ENCODE measurements at regions of chr19 and their contacts with region 1.

Region 1: GRCh38 chr19:16185123-16185767 is at the start of gene FAM32A:
- DNase-seq: peak; percentile 97 to 100 (median 98)
- ATAC-seq: peak; percentile 93
- H3K4me3 ChIP-seq: peak within 1 kb of the TSS; percentile 92
- H3K4me3 Mint-ChIP-seq: peak within 1 kb of the TSS; percentile 93
- H3K27ac ChIP-seq: peak within 1 kb of the TSS; percentile 83 to 85
- H3K27ac Mint-ChIP-seq: peak within 1 kb of the TSS; percentile 87
- H3K4me1 ChIP-seq: peaks cover 44% of the 10 kb centered on the region
- H3K4me1 Mint-ChIP-seq: peaks cover 29% of the 10 kb centered on the region
- H3K27me3 ChIP-seq: no peaks in the 10 kb centered on the region
- H3K27me3 Mint-ChIP-seq: no peaks in the 10 kb centered on the region
- CTCF ChIP-seq: no peak
- total RNA-seq, gene FAM32A: 44.5 to 50.3 TPM

Region 2: GRCh38 chr19:15629003-15629880 is 556.0 kb before region 1 on chr19:
- CTCF ChIA-PET with region 1: no interaction called
- POLR2A ChIA-PET with region 1: interaction called, 4 read pairs
- intact Hi-C with region 1: loop called (anchors 1 kb)
- DNase-seq: peak; percentile 77 to 95 (median 90)
- ATAC-seq: peak; percentile 98
- H3K4me3 ChIP-seq: no peak overlapping the region
- H3K4me3 Mint-ChIP-seq: no peak overlapping the region
- H3K27ac ChIP-seq: no peak overlapping the region
- H3K27ac Mint-ChIP-seq: no peak overlapping the region
- H3K4me1 ChIP-seq: peaks cover 10% of the 10 kb centered on the region
- H3K4me1 Mint-ChIP-seq: no peaks in the 10 kb centered on the region
- H3K27me3 ChIP-seq: peaks cover 0 to 7% of the 10 kb centered on the region in 2 experiments
- H3K27me3 Mint-ChIP-seq: peaks cover 22% of the 10 kb centered on the region
- CTCF ChIP-seq: peak; percentile 93

Region 3: GRCh38 chr19:16062789-16063188 is 122.5 kb before region 1 on chr19:
- CTCF ChIA-PET with region 1: interaction called, 3 read pairs
- POLR2A ChIA-PET with region 1: interaction called, 3 read pairs
- intact Hi-C with region 1: loop called in 1 of 2 experiments (anchors 1 kb)
- DNase-seq: peak; percentile 58 to 84 (median 66)
- ATAC-seq: peak; percentile 91
- H3K4me3 ChIP-seq: no peak overlapping the region
- H3K4me3 Mint-ChIP-seq: no peak overlapping the region
- H3K27ac ChIP-seq: no peak overlapping the region
- H3K27ac Mint-ChIP-seq: no peak overlapping the region
- H3K4me1 ChIP-seq: peaks cover 24% of the 10 kb centered on the region
- H3K4me1 Mint-ChIP-seq: peaks cover 18% of the 10 kb centered on the region
- H3K27me3 ChIP-seq: no peaks in the 10 kb centered on the region
- H3K27me3 Mint-ChIP-seq: no peaks in the 10 kb centered on the region
- CTCF ChIP-seq: peak; percentile 90

Region 4: GRCh38 chr19:16111160-16111908 is 73.9 kb before region 1 on chr19 and contains the start of gene RAB8A:
- CTCF ChIA-PET with region 1: no interaction called
- POLR2A ChIA-PET with region 1: interaction called, 16 read pairs
- intact Hi-C with region 1: loop called (anchors 1 kb)
- DNase-seq: peak; percentile 98 to 100 (median 99)
- ATAC-seq: peak; percentile 86
- H3K4me3 ChIP-seq: peak within 1 kb of the TSS; percentile 94
- H3K4me3 Mint-ChIP-seq: peak within 1 kb of the TSS; percentile 95
- H3K27ac ChIP-seq: peak within 1 kb of the TSS; percentile 89 to 92
- H3K27ac Mint-ChIP-seq: peak within 1 kb of the TSS; percentile 96
- H3K4me1 ChIP-seq: peaks cover 51% of the 10 kb centered on the region
- H3K4me1 Mint-ChIP-seq: peaks cover 44% of the 10 kb centered on the region
- H3K27me3 ChIP-seq: no peaks in the 10 kb centered on the region
- H3K27me3 Mint-ChIP-seq: no peaks in the 10 kb centered on the region
- CTCF ChIP-seq: peak; percentile 84
- total RNA-seq, gene RAB8A: 74.9 to 79.0 TPM

Region 5: GRCh38 chr19:16301999-16302694 is 116.9 kb after region 1 on chr19:
- CTCF ChIA-PET with region 1: no interaction called
- POLR2A ChIA-PET with region 1: no interaction called
- intact Hi-C with region 1: no loop called
- DNase-seq: no peak
- ATAC-seq: no peak
- H3K4me3 ChIP-seq: no peak overlapping the region
- H3K4me3 Mint-ChIP-seq: no peak overlapping the region
- H3K27ac ChIP-seq: no peak overlapping the region
- H3K27ac Mint-ChIP-seq: no peak overlapping the region
- H3K4me1 ChIP-seq: no peaks in the 10 kb centered on the region
- H3K4me1 Mint-ChIP-seq: no peaks in the 10 kb centered on the region
- H3K27me3 ChIP-seq: no peaks in the 10 kb centered on the region
- H3K27me3 Mint-ChIP-seq: no peaks in the 10 kb centered on the region
- CTCF ChIP-seq: no peak

Region 6: DNA sequence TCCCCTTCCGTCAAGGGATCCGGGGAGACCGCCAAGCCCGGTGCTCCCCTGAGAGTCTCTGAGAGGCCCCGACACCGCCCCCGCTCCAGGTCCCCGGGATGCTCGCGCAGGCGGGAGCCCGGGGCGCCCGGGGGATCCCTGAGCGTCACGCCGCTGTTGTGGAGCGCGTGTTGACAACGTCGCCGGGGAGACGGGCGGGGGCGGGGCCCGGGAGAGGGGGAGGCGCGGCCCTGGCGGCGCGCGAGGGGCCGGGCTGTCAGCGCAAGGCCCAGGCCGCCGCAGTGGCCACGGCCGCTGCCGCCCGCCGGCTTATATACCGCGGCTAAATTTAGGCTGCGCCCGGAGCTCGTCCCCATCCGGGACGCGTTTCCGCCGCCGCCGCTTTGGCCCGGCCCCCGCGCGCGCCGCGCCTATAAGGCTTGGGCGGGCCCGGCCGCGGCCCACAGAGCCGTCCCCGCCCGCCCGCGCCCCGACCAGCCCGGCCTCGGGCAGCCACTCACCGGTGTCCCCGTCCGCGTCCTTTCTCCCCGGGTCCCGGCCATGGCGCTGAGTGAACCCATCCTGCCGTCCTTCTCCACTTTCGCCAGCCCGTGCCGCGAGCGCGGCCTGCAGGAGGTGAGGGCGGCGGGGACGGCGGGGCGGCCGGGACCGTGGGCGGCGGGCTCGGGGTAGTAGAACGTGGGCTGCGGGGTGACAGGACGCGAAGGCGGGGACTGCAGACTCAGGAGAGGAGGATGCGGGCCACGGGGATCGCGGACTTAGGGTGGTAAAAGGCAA is 139.3 kb after region 1 on chr19 and contains the start of gene KLF2:
- CTCF ChIA-PET with region 1: no interaction called
- POLR2A ChIA-PET with region 1: interaction called, 23 read pairs
- intact Hi-C with region 1: no loop called
- DNase-seq: peak; percentile 91 to 99 (median 94)
- ATAC-seq: peak; percentile 55
- H3K4me3 ChIP-seq: peak within 1 kb of the TSS; percentile 98
- H3K4me3 Mint-ChIP-seq: peak within 1 kb of the TSS; percentile 83
- H3K27ac ChIP-seq: peak within 1 kb of the TSS; percentile 90 to 100
- H3K27ac Mint-ChIP-seq: peak within 1 kb of the TSS; percentile 97
- H3K4me1 ChIP-seq: peaks cover 42% of the 10 kb centered on the region
- H3K4me1 Mint-ChIP-seq: peaks cover 60% of the 10 kb centered on the region
- H3K27me3 ChIP-seq: no peaks in the 10 kb centered on the region
- H3K27me3 Mint-ChIP-seq: peaks cover 24% of the 10 kb centered on the region
- CTCF ChIP-seq: no peak
- total RNA-seq, gene KLF2: 1,201 to 1,291 TPM

Region 7: GRCh38 chr19:16382775-16383543 is 197.7 kb after region 1 on chr19:
- CTCF ChIA-PET with region 1: interaction called, 3 read pairs
- POLR2A ChIA-PET with region 1: interaction called, 14 read pairs
- intact Hi-C with region 1: loop called in 1 of 2 experiments (anchors 2 kb)
- DNase-seq: peak; percentile 69 to 90 (median 82)
- ATAC-seq: peak; percentile 81
- H3K4me3 ChIP-seq: peak overlapping the region; percentile 19
- H3K4me3 Mint-ChIP-seq: peak overlapping the region; percentile 76
- H3K27ac ChIP-seq: peak overlapping the region; percentile 16 to 67
- H3K27ac Mint-ChIP-seq: no peak overlapping the region
- H3K4me1 ChIP-seq: peaks cover 82% of the 10 kb centered on the region
- H3K4me1 Mint-ChIP-seq: peaks cover 62% of the 10 kb centered on the region
- H3K27me3 ChIP-seq: no peaks in the 10 kb centered on the region
- H3K27me3 Mint-ChIP-seq: no peaks in the 10 kb centered on the region
- CTCF ChIP-seq: peak; percentile 92